RWPE1 (cell line): ENCODE measurements at regions of chr15 and their contacts with region 1.

Region 1: GRCh38 chr15:85840065-85840801 is 45.5 kb upstream of the KLHL25 start:
- DNase-seq: peak; percentile 83
- H3K27ac ChIP-seq: no peak overlapping the region; the same call in 1 of the 2 replicates
- CTCF ChIP-seq: peak; percentile 98

Region 2: GRCh38 chr15:85800467-85801123 is 39.6 kb before region 1 on chr15:
- CTCF ChIA-PET with region 1: interaction called, 18 read pairs
- POLR2A ChIA-PET with region 1: no interaction called
- DNase-seq: peak; percentile 70
- H3K27ac ChIP-seq: no peak overlapping the region
- CTCF ChIP-seq: peak; percentile 52